A549 (cell line): ENCODE measurements at regions of chr5 and their contacts with region 1.

Region 1: DNA sequence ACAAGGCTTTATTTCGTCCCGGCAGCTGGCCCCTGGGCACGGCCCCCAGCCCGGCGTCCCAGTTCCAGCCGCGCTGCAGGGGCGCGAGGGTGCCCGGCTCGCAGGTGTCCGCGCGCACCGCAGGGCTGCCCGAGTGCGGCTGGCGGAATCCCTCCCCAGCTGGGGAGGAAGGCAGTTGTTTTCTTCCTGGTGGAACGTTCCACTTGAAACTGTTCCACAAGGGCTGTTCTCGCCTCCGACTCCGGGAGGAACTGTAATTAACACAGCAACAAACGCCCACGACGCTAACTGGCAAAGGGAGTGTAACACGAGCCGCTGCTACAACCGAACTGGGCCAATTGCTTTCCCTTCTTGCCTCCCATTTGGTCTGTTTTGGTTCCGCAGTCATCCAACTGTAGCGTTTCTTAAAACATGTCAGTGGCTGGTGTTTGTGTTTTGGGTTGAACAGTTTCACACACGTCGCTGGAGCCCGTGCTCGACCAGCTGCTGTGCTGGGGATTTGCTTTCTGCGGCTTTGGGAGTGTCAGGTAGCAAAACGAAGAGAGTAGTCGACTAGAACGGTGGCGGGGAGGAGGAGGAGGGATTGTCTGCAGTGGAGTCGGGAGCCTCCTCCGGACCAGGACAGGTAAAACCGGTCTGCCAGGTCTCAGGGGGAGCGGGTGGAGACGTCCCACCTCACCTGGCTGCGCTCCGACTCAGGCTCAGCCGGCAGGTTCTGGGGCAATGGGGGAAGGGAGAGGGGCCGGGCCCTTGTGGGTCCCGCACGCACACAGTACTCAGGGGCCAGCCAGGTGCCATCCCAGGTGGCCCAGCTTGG is 131.6 kb upstream of the NIPBL start:
- DNase-seq: peak in 1 of 2 experiments; percentile 27
- ATAC-seq: peak; percentile 60 to 88
- H3K4me3 ChIP-seq: peak overlapping the region; percentile 65
- H3K27ac ChIP-seq: peak overlapping the region in 1 of 2 experiments; percentile 33; a peak in 2 of 6 replicates
- H3K4me1 ChIP-seq: 0 out of 3 replicates have a peak, but pooled peaks cover 4% of the 10 kb centered on the region
- CTCF ChIP-seq: peak; percentile 59; the same call in 1 of the 3 replicates
- EP300 ChIP-seq: no peak
- POLR2A ChIP-seq: no peak
- RAD21 ChIP-seq: peak in 1 of 2 experiments; percentile 59; a peak in 2 of 5 replicates

Region 2: DNA sequence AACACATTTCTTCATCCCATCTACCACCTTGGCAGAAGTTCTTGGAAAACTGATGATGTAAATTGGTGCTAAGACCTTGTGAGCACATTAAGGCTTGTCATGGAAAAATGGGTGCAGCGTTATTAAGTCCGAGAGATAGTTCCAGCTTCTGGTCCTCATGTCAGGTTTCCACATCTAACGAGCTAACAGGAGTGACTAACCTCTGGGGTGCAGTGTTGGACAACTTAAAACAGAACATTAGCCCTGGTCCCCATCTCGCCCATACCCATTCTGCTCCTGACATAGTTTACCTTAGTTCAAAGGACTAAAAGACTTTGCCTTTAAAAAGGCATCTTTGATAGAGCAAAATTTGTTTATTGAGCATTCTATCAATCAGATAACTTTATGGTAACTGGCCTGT is 10.6 kb before region 1 on chr5:
- CTCF ChIA-PET with region 1: interaction called, 27 read pairs
- POLR2A ChIA-PET with region 1: no interaction called
- DNase-seq: peak in 1 of 2 experiments; percentile 52
- ATAC-seq: peak; percentile 75 to 87; a peak in 5 of 6 replicates
- H3K4me3 ChIP-seq: no peak overlapping the region
- H3K27ac ChIP-seq: no peak overlapping the region
- H3K4me1 ChIP-seq: no peaks in the 10 kb centered on the region
- CTCF ChIP-seq: peak; percentile 40
- EP300 ChIP-seq: no peak
- POLR2A ChIP-seq: no peak
- RAD21 ChIP-seq: peak; percentile 41 to 47; a peak in 4 of 5 replicates

Region 3: DNA sequence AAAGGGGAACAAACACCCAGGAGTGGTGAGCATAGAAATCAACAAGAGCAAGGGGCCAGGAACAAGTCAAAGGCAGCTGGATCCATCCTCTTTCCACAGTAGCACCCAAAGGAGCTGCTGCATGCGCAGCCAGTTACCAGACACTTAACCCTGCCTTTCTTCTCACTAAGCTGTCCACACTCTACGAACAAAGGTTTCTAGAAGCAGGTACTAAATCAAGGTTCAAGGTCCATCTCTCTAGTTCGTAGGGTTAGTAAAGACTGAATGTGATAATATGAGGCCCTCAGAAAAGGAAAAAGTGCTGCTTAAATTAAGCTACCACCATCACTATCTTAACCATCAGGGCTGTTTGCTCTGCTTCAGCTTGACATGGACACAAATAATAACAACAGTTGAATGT is 10.4 kb after region 1 on chr5:
- CTCF ChIA-PET with region 1: interaction called, 14 read pairs
- POLR2A ChIA-PET with region 1: no interaction called
- DNase-seq: no peak
- ATAC-seq: no peak
- H3K4me3 ChIP-seq: no peak overlapping the region
- H3K27ac ChIP-seq: no peak overlapping the region
- H3K4me1 ChIP-seq: no peaks in the 10 kb centered on the region
- CTCF ChIP-seq: no peak
- EP300 ChIP-seq: no peak
- POLR2A ChIP-seq: no peak
- RAD21 ChIP-seq: no peak

Region 4: DNA sequence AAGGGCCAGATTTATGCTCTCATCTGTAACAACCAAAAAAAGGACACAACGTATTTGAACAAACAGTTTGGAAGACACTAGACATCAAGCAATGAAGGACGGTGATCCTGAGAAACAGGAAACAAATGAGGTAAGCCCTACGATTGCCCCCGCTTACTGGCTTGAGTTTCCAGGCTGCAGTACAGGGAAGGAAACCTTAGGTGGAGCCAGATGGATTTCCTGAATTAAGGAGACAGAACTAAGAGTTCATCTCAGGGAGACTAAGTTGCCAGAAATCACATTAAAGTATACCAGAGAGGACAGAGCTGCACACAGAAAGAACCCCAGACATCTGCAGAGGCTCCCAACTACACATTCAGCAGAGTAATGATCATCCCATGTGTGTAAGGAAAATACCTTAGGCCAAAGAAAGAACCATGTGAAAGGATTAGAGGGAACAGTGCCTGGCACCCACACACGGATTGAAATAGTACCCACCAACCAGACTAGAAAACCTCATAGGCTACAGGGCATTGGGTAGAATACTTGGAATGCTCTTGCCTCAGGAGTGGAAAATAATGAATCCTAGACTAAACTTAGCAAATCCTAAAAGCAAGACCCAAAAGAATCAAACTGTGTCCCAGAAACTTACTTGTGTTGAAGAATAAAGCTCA is 32.2 kb after region 1 on chr5:
- CTCF ChIA-PET with region 1: no interaction called
- POLR2A ChIA-PET with region 1: no interaction called
- DNase-seq: peak; percentile 34 to 37
- ATAC-seq: peak; percentile 89 to 92
- H3K4me3 ChIP-seq: no peak overlapping the region
- H3K27ac ChIP-seq: no peak overlapping the region
- H3K4me1 ChIP-seq: no peaks in the 10 kb centered on the region
- CTCF ChIP-seq: 0 out of 3 replicates have a peak, but pooled peaks have one; percentile 6
- EP300 ChIP-seq: no peak
- POLR2A ChIP-seq: no peak
- RAD21 ChIP-seq: peak in 1 of 2 experiments; percentile 32; a peak in 1 of 5 replicates

Region 5: GRCh38 chr5:36820900-36821299 is 75.9 kb after region 1 on chr5:
- CTCF ChIA-PET with region 1: no interaction called
- POLR2A ChIA-PET with region 1: no interaction called
- DNase-seq: peak in 1 of 2 experiments; percentile 40
- ATAC-seq: 0 out of 6 replicates have a peak, but pooled peaks of 1 of the 2 experiments have one; percentile 34
- H3K4me3 ChIP-seq: no peak overlapping the region
- H3K27ac ChIP-seq: no peak overlapping the region
- H3K4me1 ChIP-seq: no peaks in the 10 kb centered on the region
- CTCF ChIP-seq: no peak
- EP300 ChIP-seq: no peak
- POLR2A ChIP-seq: no peak
- RAD21 ChIP-seq: no peak

Region 6: GRCh38 chr5:36870399-36871040 is 125.5 kb after region 1 on chr5:
- CTCF ChIA-PET with region 1: interaction called, 22 read pairs
- POLR2A ChIA-PET with region 1: interaction called, 4 read pairs
- DNase-seq: peak; percentile 74 to 78
- ATAC-seq: peak; percentile 79 to 83
- H3K4me3 ChIP-seq: no peak overlapping the region
- H3K27ac ChIP-seq: no peak overlapping the region
- H3K4me1 ChIP-seq: peaks cover 17% of the 10 kb centered on the region
- CTCF ChIP-seq: peak; percentile 74
- EP300 ChIP-seq: no peak
- POLR2A ChIP-seq: no peak
- RAD21 ChIP-seq: peak; percentile 46 to 51; a peak in 4 of 5 replicates

Region 7: GRCh38 chr5:37005946-37006540 is 261.1 kb after region 1 on chr5:
- CTCF ChIA-PET with region 1: interaction called, 11 read pairs
- POLR2A ChIA-PET with region 1: no interaction called
- DNase-seq: peak; percentile 10 to 31
- ATAC-seq: peak in 1 of 2 experiments; percentile 67; a peak in 3 of 6 replicates
- H3K4me3 ChIP-seq: no peak overlapping the region
- H3K27ac ChIP-seq: no peak overlapping the region
- H3K4me1 ChIP-seq: peaks cover 7% of the 10 kb centered on the region; the same call in 2 of the 3 replicates
- CTCF ChIP-seq: peak; percentile 72
- EP300 ChIP-seq: no peak
- POLR2A ChIP-seq: no peak
- RAD21 ChIP-seq: peak; percentile 61 to 65